Transverse colon (tissue), 4 donors: ENCODE measurements at regions of chr17 and their contacts with region 1.

Region 1: GRCh38 chr17:54559883-54560282 is 340.8 kb upstream of the TOM1L1 start:
- DNase-seq: no peak
- H3K4me3 ChIP-seq: no peak overlapping the region
- H3K27ac ChIP-seq: no peak overlapping the region
- H3K4me1 ChIP-seq: no peaks in the 10 kb centered on the region
- H3K27me3 ChIP-seq: no peaks in the 10 kb centered on the region
- CTCF ChIP-seq: no peak
- EP300 ChIP-seq: no peak
- POLR2A ChIP-seq: no peak

Region 2: DNA sequence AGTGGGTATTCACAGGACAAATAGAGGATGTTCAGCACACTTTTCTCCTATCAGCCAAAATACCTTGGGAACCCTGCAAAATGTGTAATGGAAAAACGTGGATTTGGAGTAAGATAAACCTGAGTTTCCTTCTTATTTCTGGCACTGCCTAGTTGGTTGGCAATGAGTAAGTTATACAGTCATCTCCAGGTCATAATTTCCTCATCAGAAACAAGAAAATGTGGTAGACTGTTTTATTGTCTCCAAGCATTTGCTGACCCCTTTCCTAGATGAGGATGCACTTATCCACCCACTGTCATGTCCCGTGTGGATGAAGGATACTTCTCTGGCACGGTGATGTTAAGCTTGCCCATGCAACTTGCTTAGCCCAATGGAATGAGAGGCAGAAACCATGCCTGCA is 279.1 kb before region 1 on chr17:
- in situ Hi-C with region 1: loop called in 1 of 4 experiments (anchors 25 kb)
- intact Hi-C with region 1: no loop called
- DNase-seq: no peak
- H3K4me3 ChIP-seq: no peak overlapping the region
- H3K27ac ChIP-seq: no peak overlapping the region
- H3K4me1 ChIP-seq: no peaks in the 10 kb centered on the region
- H3K27me3 ChIP-seq: no peaks in the 10 kb centered on the region
- CTCF ChIP-seq: no peak
- EP300 ChIP-seq: no peak
- POLR2A ChIP-seq: no peak

Region 3: GRCh38 chr17:55198690-55199370 is 638.9 kb after region 1 on chr17:
- in situ Hi-C with region 1: no loop called
- intact Hi-C with region 1: no loop called
- DNase-seq: no peak
- H3K4me3 ChIP-seq: no peak overlapping the region
- H3K27ac ChIP-seq: no peak overlapping the region
- H3K4me1 ChIP-seq: no peaks in the 10 kb centered on the region
- H3K27me3 ChIP-seq: no peaks in the 10 kb centered on the region
- CTCF ChIP-seq: no peak
- EP300 ChIP-seq: no peak
- POLR2A ChIP-seq: no peak